ENCODE measurements at regions of chr3 and their contacts with region 1.

Region 1: DNA sequence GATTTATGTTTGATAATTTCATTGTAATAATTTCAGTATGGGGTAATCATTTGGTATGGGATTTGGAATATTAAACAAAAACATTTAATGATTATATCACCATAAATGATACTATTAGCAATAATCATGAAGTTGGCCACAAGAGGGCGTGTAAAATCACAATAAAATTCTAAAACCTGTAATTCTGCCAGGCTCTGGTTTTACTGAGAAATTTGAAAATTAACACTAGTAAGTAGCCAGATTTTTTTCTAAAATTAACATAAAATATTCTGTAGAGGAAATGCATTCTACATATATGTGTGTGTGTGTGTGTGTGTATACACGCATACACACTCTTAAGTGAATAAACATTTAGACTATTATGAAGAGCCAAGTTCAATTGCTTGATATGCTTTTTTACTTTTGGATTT is 40.5 kb downstream of the FEZF2 start:
- DNase-seq: no peak
- ATAC-seq: no peak
- H3K4me3 Mint-ChIP-seq: no peak overlapping the region
- H3K27ac Mint-ChIP-seq: no peak overlapping the region
- H3K4me1 Mint-ChIP-seq: no peaks in the 10 kb centered on the region
- H3K27me3 Mint-ChIP-seq: no peaks in the 10 kb centered on the region
- CTCF ChIP-seq: no peak

Region 2: DNA sequence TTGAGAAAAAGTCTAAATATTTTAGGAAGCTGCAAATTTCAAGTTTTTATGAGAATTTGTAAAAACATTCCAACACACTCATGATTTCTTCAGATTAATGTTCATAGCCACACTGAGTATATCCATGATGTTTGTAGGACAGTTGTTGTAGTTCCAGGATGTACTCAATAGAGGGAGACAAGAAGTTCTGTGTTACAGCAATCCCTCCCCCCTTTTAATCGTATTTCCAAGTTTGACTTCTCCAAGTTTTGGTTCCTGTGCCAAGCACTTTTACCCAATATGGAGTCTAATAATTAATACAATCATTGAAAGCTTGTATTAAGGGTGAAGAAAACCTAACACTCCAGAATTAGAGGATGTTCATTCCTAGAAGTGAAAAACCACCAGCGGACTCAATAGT is 102.9 kb before region 1 on chr3:
- CTCF ChIA-PET with region 1: no interaction called
- POLR2A ChIA-PET with region 1: no interaction called
- intact Hi-C with region 1: no loop called
- DNase-seq: no peak
- ATAC-seq: no peak
- H3K4me3 Mint-ChIP-seq: no peak overlapping the region
- H3K27ac Mint-ChIP-seq: no peak overlapping the region
- H3K4me1 Mint-ChIP-seq: no peaks in the 10 kb centered on the region
- H3K27me3 Mint-ChIP-seq: peaks cover 2% of the 10 kb centered on the region
- CTCF ChIP-seq: no peak

Region 3: GRCh38 chr3:62558549-62559112 is 225.8 kb after region 1 on chr3:
- CTCF ChIA-PET with region 1: no interaction called
- POLR2A ChIA-PET with region 1: no interaction called
- intact Hi-C with region 1: loop called (anchors 5 kb)
- DNase-seq: no peak
- ATAC-seq: no peak
- H3K4me3 Mint-ChIP-seq: no peak overlapping the region
- H3K27ac Mint-ChIP-seq: no peak overlapping the region
- H3K4me1 Mint-ChIP-seq: no peaks in the 10 kb centered on the region
- H3K27me3 Mint-ChIP-seq: no peaks in the 10 kb centered on the region
- CTCF ChIP-seq: no peak

Measured in activated B cell treated with CpG ODN at 0.5 μM for 24 hours (primary cell).